Ascending aorta (tissue), 2 donors: ENCODE measurements at regions of chr19 and their contacts with region 1.

Region 1: DNA sequence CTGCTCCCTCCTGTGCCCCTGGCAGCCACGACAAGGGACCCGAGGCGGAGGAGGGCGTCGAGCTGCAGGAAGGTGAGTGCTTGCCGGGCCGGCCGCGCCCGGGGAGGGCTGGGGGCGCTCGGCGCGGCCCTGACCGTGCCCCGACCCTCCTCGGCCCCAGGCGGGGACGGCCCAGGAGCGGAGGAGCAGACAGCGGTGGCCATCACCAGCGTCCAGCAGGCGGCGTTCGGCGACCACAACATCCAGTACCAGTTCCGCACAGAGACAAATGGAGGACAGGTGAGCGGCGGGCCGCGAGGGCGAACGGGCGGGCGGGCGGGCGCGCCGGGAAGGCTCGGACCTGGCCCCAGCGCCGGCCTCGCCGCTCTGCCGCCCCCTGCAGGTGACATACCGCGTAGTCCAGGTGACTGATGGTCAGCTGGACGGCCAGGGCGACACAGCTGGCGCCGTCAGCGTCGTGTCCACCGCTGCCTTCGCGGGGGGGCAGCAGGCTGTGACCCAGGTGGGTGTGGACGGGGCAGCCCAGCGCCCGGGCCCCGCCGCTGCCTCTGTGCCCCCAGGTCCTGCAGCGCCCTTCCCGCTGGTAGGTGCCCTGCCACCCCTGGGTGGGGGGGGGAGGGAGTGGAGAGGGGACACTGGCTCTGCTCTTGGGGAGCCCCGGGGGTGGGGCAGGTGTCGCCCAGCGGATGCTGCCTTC is 807 bp downstream of the USF2 start:
- DNase-seq: peak in 1 of 2 donors; percentile 87
- H3K4me3 ChIP-seq: peak overlapping the region; percentile 86 to 98
- H3K27ac ChIP-seq: peak overlapping the region; percentile 79 to 97
- H3K4me1 ChIP-seq: peaks cover 7 to 12% of the 10 kb centered on the region in 2 donors
- H3K27me3 ChIP-seq: no peaks in the 10 kb centered on the region
- CTCF ChIP-seq: peak; percentile 38 to 59 (median 53)

Region 2: GRCh38 chr19:33795370-33796163 is 1474.0 kb before region 1 on chr19:
- intact Hi-C with region 1: loop called (anchors 10 kb)
- DNase-seq: peak in 1 of 2 donors; percentile 88
- H3K4me3 ChIP-seq: peak overlapping the region; percentile 77 to 93
- H3K27ac ChIP-seq: peak overlapping the region; percentile 93 to 96
- H3K4me1 ChIP-seq: peaks cover 4 to 6% of the 10 kb centered on the region in 2 donors
- H3K27me3 ChIP-seq: no peaks in the 10 kb centered on the region
- CTCF ChIP-seq: peak; percentile 69 to 83 (median 77)

Region 3: DNA sequence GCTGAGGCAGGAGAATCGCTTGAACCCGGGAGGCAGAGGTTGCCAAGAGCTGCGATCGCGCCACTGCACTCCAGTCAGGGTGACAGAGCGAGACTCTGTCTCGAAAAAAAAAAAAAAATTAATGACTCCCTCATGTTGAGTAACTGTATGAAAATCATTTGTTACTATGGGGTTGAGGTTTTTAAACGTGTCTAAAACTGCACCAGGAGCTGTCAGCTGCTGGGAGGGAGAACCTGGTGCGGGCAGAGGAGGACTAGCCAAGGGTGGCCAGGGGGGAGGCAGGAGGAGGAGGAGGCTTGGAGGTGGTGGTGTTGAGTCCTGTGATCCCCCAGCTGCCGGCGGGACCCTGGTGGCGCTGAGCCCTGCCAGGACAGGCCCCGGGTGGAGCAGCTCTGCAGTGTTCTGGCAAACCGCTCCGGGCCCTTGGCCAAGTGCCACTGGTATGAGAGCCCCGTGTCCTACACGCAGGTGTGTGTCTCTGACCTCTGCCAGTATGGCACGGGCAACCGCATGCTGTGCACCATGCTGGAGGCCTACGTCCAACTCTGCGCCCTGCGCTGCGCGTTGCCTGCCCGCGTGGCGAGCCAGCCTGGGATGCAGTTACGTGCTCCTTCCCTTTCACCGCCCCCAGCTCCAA is 171.0 kb before region 1 on chr19:
- intact Hi-C with region 1: no loop called
- DNase-seq: no peak
- H3K4me3 ChIP-seq: no peak overlapping the region
- H3K27ac ChIP-seq: no peak overlapping the region
- H3K4me1 ChIP-seq: no peaks in the 10 kb centered on the region
- H3K27me3 ChIP-seq: no peaks in the 10 kb centered on the region
- CTCF ChIP-seq: no peak

Region 4: DNA sequence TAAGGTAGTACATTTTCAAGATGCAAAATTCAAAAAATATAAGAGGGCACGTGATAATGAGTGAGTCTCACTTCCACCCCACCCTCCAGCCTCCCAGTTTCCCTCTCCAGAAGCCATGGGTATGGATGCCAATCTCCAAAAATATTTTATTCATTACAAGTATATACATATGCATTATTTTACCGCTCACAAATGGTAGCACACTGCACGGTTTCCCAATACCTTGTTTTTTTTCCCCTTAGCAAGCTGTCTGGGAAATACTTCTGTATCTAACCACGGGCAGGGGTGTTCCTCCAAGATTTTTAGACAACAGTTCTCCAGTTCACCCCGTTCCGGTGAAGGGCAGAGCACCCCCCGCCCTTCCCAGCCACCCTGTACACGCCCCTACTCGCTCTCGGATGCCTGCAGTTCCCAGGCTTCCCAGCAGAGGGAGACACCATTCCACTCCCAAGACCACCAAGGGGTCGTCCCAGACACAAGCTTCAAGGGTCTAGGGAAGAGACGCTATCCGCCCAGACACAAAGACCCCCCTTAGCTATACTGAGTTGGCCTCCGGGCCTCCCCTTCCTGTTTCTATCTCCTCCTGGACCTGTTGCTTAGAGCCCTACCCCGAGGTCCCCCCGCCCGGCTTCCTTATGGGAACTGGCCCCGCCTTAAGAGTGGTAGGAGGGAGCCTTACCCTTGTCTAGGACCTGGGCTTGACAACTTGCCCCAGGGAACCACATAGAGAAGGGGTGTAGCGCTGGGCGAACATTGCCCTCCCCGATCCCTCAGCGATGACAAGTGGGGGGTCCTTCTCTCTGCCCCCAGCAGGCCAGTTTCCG is 155.0 kb before region 1 on chr19:
- intact Hi-C with region 1: loop called (anchors 2 kb)
- DNase-seq: peak in 1 of 2 donors; percentile 80
- H3K4me3 ChIP-seq: peak overlapping the region; percentile 10 to 55
- H3K27ac ChIP-seq: no peak overlapping the region
- H3K4me1 ChIP-seq: peaks cover 4 to 6% of the 10 kb centered on the region in 2 donors
- H3K27me3 ChIP-seq: no peaks in the 10 kb centered on the region
- CTCF ChIP-seq: peak; percentile 93 to 99 (median 98)

Region 5: DNA sequence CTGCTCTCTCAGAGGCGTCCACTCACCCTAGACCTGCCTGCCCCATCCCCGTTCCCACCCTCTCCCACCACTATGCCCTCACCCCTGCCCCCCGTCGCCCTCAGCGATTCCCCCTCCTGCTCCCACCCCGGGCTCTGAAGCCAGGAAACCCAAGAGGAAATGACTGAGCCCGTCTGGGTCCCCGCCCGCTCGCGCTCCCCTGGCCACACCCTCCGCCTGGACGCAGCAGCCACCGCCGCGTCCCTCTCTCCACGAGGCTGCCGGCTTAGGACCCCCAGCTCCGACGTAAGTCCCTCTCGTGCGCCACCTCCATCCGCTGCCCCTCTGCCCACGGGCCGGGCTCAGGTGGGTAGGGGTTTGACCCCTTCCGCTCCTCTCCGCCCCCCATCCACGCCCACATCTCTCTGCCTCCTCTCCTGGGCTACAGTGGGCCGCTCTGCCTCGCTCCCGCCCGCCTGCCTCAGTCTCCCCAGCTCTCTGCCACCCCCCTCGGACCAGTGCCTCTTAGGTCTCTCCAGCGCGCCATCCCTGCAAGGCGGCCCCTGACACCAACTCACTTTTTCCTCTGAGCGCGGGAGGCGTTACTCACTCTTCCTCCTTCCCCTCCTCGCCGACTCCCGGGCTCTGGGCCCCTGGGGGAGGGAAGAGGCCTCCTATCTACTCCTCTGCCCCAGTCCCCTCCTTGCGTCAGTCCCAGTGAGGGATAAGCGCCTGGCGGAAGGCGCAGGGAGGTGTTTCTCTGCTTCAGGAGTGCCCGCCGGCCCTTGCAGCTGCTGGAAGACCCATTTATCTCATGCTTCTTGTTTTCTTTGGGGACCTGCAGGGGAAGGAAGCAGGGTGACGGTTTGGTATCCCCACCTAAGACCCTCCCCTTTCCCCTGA is 114.8 kb before region 1 on chr19 and contains the start of gene FXYD5:
- intact Hi-C with region 1: loop called (anchors 5 kb)
- DNase-seq: peak; percentile 48 to 85
- H3K4me3 ChIP-seq: peak within 1 kb of the TSS; percentile 52 to 88
- H3K27ac ChIP-seq: peak within 1 kb of the TSS; percentile 62 to 69
- H3K4me1 ChIP-seq: peaks cover 11 to 15% of the 10 kb centered on the region in 2 donors
- H3K27me3 ChIP-seq: no peaks in the 10 kb centered on the region
- CTCF ChIP-seq: no peak
- total RNA-seq, gene FXYD5: 138 TPM

Region 6: DNA sequence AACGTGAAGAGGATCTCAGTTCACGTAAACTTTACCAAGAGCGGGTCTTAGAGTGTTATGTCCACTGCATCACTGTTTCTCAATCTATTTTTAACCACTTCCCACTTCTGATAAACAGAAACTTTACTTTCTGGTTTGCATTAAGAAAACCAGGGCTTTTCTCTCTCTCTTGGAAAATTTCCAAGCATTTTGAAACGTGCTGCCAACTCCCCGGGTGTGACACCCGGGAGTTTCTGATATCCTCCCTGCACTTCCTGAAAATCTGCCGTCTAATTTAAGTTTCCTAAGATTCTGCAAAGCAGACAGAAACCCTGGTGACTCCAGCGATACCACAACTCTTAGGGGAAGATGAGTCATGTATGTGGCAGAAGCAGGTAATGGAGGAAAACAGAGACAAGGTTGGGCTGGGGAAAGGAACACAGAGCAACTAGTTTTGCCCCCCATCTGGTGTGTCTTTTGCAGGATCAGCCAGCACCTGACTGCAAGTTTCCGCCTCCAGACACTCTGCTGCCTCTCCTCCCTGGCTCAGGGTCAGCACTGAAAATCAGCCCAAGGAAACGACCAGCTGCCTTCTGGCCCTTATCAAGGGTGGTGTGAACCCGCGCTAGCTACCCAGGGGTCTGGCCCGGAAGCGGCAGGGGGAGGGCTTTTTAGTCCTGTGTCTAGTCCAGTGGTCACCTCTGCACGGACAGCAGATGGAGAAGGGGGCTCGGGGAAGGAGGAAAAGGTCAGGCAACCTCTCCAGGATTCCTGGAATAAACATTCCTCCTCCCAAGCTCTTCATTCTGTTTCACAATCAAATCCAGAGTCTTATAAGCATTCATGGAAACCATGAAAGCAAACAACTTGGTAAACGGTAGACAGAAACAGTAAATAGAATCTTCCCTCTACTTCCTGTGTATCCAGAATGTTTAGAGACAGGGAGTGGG is 167.2 kb after region 1 on chr19:
- intact Hi-C with region 1: no loop called
- DNase-seq: no peak
- H3K4me3 ChIP-seq: no peak overlapping the region
- H3K27ac ChIP-seq: no peak overlapping the region
- H3K4me1 ChIP-seq: peaks cover 0 to 4% of the 10 kb centered on the region in 2 donors
- H3K27me3 ChIP-seq: no peaks in the 10 kb centered on the region
- CTCF ChIP-seq: no peak

Region 7: GRCh38 chr19:35545001-35545911 is 275.7 kb after region 1 on chr19 and contains the start of gene TMEM147:
- intact Hi-C with region 1: loop called (anchors 5 kb)
- DNase-seq: peak; percentile 65 to 96
- H3K4me3 ChIP-seq: peak within 1 kb of the TSS; percentile 87 to 88
- H3K27ac ChIP-seq: peak within 1 kb of the TSS; percentile 76 to 88
- H3K4me1 ChIP-seq: peaks cover 0 to 15% of the 10 kb centered on the region in 2 donors
- H3K27me3 ChIP-seq: no peaks in the 10 kb centered on the region
- CTCF ChIP-seq: no peak
- total RNA-seq, gene TMEM147: 99.7 TPM